Posterior cingulate gyrus (tissue), 11 donors: ENCODE measurements at regions of chr4 and their contacts with region 1.

Region 1: DNA sequence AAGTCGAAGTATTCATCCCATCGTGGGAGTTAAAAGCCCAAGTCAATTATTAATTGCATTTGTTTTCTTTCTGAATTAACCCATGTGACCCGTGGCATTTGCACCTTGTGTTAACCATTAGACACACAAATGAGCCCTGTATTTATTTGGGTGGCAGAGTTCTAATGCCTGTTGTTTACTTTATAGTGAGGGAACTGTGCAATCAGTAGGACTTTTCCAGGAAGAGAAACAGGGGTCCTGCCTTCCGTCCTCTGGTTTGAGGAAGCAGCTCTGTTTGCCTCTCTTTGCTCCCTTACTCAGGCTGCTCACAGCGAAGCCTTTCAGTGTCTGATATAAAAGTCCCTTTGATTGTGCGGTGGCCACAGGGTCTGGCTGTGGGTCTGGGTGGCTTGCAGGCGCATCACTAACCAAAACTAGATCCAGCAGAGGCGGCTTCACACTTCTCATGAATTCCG is 263.6 kb downstream of the PTTG2 start:
- DNase-seq: peak in 7 of 10 donors; percentile 31 to 93 (median 60)

Region 2: GRCh38 chr4:38013461-38014366 is 210.1 kb before region 1 on chr4:
- intact Hi-C with region 1: no loop called
- DNase-seq: no peak

Region 3: GRCh38 chr4:38306482-38307071 is 82.8 kb after region 1 on chr4:
- intact Hi-C with region 1: loop called (anchors 5 kb)
- DNase-seq: no peak